Activated CD8-positive, alpha-beta T cell treated with anti-CD3 and anti-CD28 coated beads for 36 hours (primary cell): ENCODE measurements at regions of chr3 and their contacts with region 1.

Region 1: DNA sequence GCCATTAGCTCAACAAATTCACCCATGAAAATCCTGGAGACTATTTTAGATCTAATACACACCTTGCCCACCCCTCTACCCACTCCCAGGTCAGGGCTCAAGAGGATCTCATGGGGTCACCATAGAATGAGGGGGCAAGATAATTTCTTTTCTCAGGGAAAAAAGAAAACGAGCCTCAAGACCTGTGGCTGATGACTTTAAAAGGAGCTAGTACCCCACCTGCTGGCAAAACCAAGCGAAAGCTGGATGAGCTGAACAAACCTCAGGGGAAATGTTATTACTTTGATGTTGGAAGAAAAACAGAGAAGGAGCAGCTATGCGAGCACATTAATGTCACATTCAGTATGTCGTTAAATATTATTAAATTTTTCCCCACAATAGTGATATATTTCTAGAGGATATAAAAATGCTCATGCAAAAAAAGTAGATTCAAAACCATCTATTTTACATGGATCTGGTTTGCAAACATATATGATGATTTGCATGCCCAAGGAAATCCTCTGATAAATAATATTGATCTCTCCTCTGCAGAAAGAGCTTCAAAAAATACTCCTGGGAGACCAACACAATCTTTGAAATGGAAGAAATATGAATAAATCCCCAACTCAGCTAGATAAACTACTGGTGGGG is 37.7 kb downstream of the PLD1 start:
- DNase-seq: peak; percentile 70
- ATAC-seq: peak; percentile 56
- H3K4me3 Mint-ChIP-seq: no peak overlapping the region
- H3K27ac Mint-ChIP-seq: no peak overlapping the region
- H3K4me1 Mint-ChIP-seq: no peaks in the 10 kb centered on the region
- H3K27me3 Mint-ChIP-seq: peaks cover 6% of the 10 kb centered on the region
- CTCF ChIP-seq: peak; percentile 60

Region 2: GRCh38 chr3:170961616-170962400 is 810.7 kb before region 1 on chr3:
- CTCF ChIA-PET with region 1: interaction called, 10 read pairs
- POLR2A ChIA-PET with region 1: no interaction called
- intact Hi-C with region 1: loop called (anchors 5 kb)
- DNase-seq: peak; percentile 16
- ATAC-seq: no peak
- H3K4me3 Mint-ChIP-seq: no peak overlapping the region
- H3K27ac Mint-ChIP-seq: no peak overlapping the region
- H3K4me1 Mint-ChIP-seq: no peaks in the 10 kb centered on the region
- H3K27me3 Mint-ChIP-seq: peaks cover 1% of the 10 kb centered on the region
- CTCF ChIP-seq: peak; percentile 76

Region 3: DNA sequence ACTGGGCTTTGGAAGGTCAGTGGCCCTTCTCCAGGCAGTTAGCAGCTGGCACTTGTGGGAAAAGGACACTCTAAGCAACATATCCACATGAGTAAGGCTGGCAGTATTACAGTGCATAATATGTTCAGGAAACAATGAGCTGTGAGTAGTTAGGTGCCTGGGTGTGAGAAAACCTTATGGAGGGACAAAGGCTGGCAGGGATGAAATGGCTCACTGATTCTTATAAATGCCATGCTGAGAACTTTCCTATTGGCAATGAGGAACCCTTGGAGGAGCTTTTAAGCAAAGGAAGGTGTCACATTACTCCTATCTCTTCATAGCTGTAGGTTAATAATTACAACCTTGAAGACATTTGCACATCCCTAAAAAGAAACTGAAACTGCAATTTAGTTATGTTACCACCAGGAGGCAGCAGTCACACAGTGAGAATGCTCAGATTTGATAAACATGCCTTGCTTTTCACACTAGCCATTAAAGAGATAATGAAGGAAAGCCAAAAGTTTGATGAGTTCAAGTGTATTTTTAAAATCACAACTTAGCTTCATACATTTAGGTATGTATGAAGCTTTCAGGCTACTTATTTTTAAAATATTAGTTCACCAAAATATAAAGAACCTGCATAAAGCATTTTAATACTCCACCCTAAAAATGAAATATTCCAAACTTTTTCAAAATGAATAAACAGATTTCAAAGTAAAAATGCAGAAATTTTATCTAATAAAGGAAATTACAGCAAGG is 609.4 kb before region 1 on chr3:
- CTCF ChIA-PET with region 1: interaction called, 17 read pairs
- POLR2A ChIA-PET with region 1: no interaction called
- intact Hi-C with region 1: no loop called
- DNase-seq: peak; percentile 20
- ATAC-seq: peak; percentile 42
- H3K4me3 Mint-ChIP-seq: no peak overlapping the region
- H3K27ac Mint-ChIP-seq: no peak overlapping the region
- H3K4me1 Mint-ChIP-seq: peaks cover 25% of the 10 kb centered on the region
- H3K27me3 Mint-ChIP-seq: no peaks in the 10 kb centered on the region
- CTCF ChIP-seq: peak; percentile 93

Region 4: GRCh38 chr3:171640520-171641412 is 131.8 kb before region 1 on chr3:
- CTCF ChIA-PET with region 1: interaction called, 40 read pairs
- POLR2A ChIA-PET with region 1: no interaction called
- intact Hi-C with region 1: no loop called
- DNase-seq: no peak
- ATAC-seq: no peak
- H3K4me3 Mint-ChIP-seq: no peak overlapping the region
- H3K27ac Mint-ChIP-seq: no peak overlapping the region
- H3K4me1 Mint-ChIP-seq: no peaks in the 10 kb centered on the region
- H3K27me3 Mint-ChIP-seq: no peaks in the 10 kb centered on the region
- CTCF ChIP-seq: no peak

Region 5: GRCh38 chr3:171703756-171704401 is 68.7 kb before region 1 on chr3:
- CTCF ChIA-PET with region 1: interaction called, 12 read pairs
- POLR2A ChIA-PET with region 1: no interaction called
- intact Hi-C with region 1: no loop called
- DNase-seq: peak; percentile 33
- ATAC-seq: no peak
- H3K4me3 Mint-ChIP-seq: no peak overlapping the region
- H3K27ac Mint-ChIP-seq: no peak overlapping the region
- H3K4me1 Mint-ChIP-seq: no peaks in the 10 kb centered on the region
- H3K27me3 Mint-ChIP-seq: peaks cover 9% of the 10 kb centered on the region
- CTCF ChIP-seq: peak; percentile 36

Region 6: GRCh38 chr3:171829841-171830517 is 57.4 kb after region 1 on chr3:
- CTCF ChIA-PET with region 1: interaction called, 11 read pairs
- POLR2A ChIA-PET with region 1: no interaction called
- intact Hi-C with region 1: no loop called
- DNase-seq: peak; percentile 34
- ATAC-seq: peak; percentile 64
- H3K4me3 Mint-ChIP-seq: no peak overlapping the region
- H3K27ac Mint-ChIP-seq: no peak overlapping the region
- H3K4me1 Mint-ChIP-seq: no peaks in the 10 kb centered on the region
- H3K27me3 Mint-ChIP-seq: peaks cover 13% of the 10 kb centered on the region
- CTCF ChIP-seq: peak; percentile 46

Region 7: DNA sequence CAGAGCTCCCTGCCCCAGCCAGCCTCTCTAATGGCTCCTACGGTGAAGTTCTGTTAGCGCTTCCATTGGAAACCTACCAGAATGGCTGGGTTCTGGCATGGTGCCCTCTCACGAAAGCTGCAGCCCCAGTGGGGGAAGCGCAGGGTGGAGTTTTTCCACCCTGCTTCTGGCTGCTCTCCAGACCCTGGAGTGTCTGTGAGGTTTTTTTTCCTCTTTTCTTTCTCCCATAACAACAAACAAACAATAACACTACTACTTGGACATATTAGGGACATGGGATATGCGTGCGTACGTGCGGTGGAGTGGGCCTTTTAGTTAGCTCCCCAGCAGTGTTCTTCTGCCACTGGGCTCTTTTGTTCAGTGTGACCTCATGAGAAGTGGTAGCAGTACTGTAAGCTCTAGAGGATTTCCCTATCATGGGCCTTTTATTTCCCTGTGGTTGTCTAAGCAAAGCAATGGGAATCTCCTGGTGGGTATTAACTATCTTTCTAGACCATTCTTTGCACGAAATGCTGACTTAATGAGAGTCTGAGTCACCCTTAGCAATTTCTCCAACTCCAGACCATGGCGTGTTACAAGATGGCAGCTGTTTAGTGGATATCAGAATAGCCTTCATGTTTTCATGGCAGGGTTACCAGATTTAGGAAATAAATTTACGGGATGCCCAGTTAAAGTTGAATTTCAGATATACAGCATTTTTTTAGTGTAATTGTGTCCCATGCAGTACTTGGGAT is 428.8 kb after region 1 on chr3:
- CTCF ChIA-PET with region 1: no interaction called
- POLR2A ChIA-PET with region 1: no interaction called
- intact Hi-C with region 1: no loop called
- DNase-seq: no peak
- ATAC-seq: no peak
- H3K4me3 Mint-ChIP-seq: no peak overlapping the region
- H3K27ac Mint-ChIP-seq: no peak overlapping the region
- H3K4me1 Mint-ChIP-seq: no peaks in the 10 kb centered on the region
- H3K27me3 Mint-ChIP-seq: no peaks in the 10 kb centered on the region
- CTCF ChIP-seq: no peak